ENCODE measurements at regions of chr4 and their contacts with region 1.

Region 1: GRCh38 chr4:22978656-22979055 is 285.9 kb downstream of the GBA3 start:
- DNase-seq: no peak
- H3K4me3 ChIP-seq: no peak overlapping the region
- H3K27ac ChIP-seq: no peak overlapping the region
- H3K4me1 ChIP-seq: no peaks in the 10 kb centered on the region
- H3K27me3 ChIP-seq: no peaks in the 10 kb centered on the region
- CTCF ChIP-seq: no peak

Region 2: GRCh38 chr4:22962295-22962694 is 16.4 kb before region 1 on chr4:
- CTCF ChIA-PET with region 1: no interaction called
- POLR2A ChIA-PET with region 1: interaction called, 14 read pairs
- intact Hi-C with region 1: no loop called
- DNase-seq: peak in 1 of 2 experiments; percentile 15
- H3K4me3 ChIP-seq: no peak overlapping the region
- H3K27ac ChIP-seq: no peak overlapping the region
- H3K4me1 ChIP-seq: no peaks in the 10 kb centered on the region
- H3K27me3 ChIP-seq: no peaks in the 10 kb centered on the region
- CTCF ChIP-seq: peak; percentile 59